ENCODE measurements at regions of chrX and their contacts with region 1.

Region 1: GRCh38 chrX:153667956-153668396 is 5.6 kb downstream of the PNCK start:
- DNase-seq: peak; percentile 56 to 83 (median 74)
- ATAC-seq: peak; percentile 92
- H3K4me3 ChIP-seq: peak overlapping the region in 1 of 2 experiments; percentile 8
- H3K4me3 Mint-ChIP-seq: peak overlapping the region; percentile 68
- H3K27ac ChIP-seq: no peak overlapping the region
- H3K27ac Mint-ChIP-seq: no peak overlapping the region
- H3K4me1 ChIP-seq: no peaks in the 10 kb centered on the region
- H3K4me1 Mint-ChIP-seq: peaks cover 7% of the 10 kb centered on the region
- H3K27me3 ChIP-seq: no peaks in the 10 kb centered on the region
- H3K27me3 Mint-ChIP-seq: peaks cover 13% of the 10 kb centered on the region
- CTCF ChIP-seq: peak; percentile 64

Region 2: DNA sequence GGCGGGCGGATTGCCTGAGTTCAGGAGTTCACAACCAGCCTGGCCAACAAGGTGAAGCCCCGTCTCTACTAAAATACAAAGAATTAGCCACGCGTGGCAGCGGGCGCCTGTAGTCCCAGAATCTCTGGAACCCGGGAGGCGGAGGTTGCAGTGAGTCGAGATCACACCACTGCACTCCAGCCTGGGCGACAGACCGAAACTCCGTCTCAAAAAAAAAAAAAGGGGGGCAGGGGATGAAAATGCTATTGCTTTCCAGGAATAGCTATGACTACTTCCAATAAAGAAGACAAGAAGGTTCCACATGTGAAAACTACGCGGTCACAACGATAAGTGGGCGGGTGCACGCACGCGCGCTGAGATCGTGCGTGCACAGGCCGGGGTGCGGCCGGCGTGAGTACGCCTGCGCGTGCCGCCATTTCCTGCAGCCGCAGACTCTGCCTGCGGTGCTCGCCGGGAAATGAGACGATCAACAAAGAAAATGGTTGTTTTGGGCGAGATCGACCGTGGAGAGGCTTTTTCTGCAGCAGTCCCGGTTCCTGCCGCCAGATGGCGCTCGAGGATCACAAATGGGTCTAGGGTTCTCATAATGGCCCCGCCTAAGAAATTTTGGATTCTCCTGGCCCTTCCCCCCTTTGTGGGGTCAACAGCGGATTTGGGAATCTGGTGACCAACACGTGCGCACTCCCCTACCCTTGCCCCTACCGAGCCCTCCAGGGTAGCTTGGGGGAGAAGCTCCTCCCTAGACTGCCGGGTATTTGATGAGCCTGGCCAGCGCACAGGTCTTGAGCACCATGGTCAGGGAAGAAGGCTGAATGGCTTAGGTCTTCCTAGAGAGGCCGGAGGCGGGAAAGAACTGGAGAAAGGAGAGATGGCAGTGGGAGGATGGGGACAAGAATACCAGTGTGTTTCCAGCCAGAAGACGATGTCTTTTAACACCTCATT is 709.2 kb before region 1 on chrX:
- CTCF ChIA-PET with region 1: interaction called, 15 read pairs
- POLR2A ChIA-PET with region 1: no interaction called
- intact Hi-C with region 1: loop called in 1 of 2 experiments (anchors 1 kb)
- DNase-seq: peak; percentile 82 to 97 (median 90)
- ATAC-seq: peak; percentile 97
- H3K4me3 ChIP-seq: peak overlapping the region; percentile 29 to 34
- H3K4me3 Mint-ChIP-seq: peak overlapping the region; percentile 71
- H3K27ac ChIP-seq: peak overlapping the region; percentile 48 to 73
- H3K27ac Mint-ChIP-seq: peak overlapping the region; percentile 89
- H3K4me1 ChIP-seq: peaks cover 6% of the 10 kb centered on the region
- H3K4me1 Mint-ChIP-seq: peaks cover 5% of the 10 kb centered on the region
- H3K27me3 ChIP-seq: no peaks in the 10 kb centered on the region
- H3K27me3 Mint-ChIP-seq: no peaks in the 10 kb centered on the region
- CTCF ChIP-seq: peak; percentile 66

Region 3: DNA sequence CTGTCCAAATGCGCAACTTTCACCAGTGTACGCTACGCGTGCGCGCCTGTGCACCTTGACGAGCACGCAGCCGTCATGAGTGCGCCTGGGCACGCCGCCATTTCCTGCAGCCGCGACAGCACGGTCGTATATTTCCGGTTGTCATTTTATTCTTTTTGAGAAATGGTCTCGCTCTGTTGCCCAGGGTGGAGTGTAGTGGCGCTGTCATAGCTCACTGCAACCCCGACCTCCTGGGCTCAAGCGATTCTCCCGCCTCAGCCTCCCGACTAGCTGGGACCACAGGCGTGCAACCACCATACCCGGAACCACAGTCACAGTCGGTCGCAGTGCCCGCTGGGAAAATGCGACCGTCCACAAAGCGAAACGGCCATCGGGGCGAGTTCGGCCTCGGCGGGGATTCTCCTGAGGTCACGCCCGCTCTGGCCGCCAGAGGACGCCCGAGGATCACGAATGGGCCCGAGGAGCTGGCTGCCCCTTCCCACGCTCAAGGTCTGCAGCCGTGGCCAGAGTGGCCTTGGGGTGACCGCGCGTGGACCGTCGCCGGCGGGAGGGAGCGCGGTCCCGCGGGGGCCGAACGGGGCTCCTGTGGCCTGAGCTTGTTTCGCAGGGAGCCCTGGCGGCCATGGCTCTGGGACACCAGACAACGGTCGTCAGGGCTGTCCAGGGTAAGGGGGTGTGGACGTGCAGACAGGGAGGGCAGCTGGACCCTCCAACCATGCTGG is 635.4 kb before region 1 on chrX:
- CTCF ChIA-PET with region 1: interaction called, 9 read pairs
- POLR2A ChIA-PET with region 1: no interaction called
- intact Hi-C with region 1: loop called (anchors 5 kb)
- DNase-seq: peak; percentile 33 to 80 (median 64)
- ATAC-seq: peak; percentile 73
- H3K4me3 ChIP-seq: peak overlapping the region; percentile 50 to 52
- H3K4me3 Mint-ChIP-seq: peak overlapping the region; percentile 86
- H3K27ac ChIP-seq: peak overlapping the region; percentile 42 to 51
- H3K27ac Mint-ChIP-seq: peak overlapping the region; percentile 91
- H3K4me1 ChIP-seq: peaks cover 10% of the 10 kb centered on the region
- H3K4me1 Mint-ChIP-seq: peaks cover 17% of the 10 kb centered on the region
- H3K27me3 ChIP-seq: no peaks in the 10 kb centered on the region
- H3K27me3 Mint-ChIP-seq: no peaks in the 10 kb centered on the region
- CTCF ChIP-seq: peak; percentile 66

Region 4: GRCh38 chrX:153539171-153539978 is 128.6 kb before region 1 on chrX:
- CTCF ChIA-PET with region 1: interaction called, 79 read pairs
- POLR2A ChIA-PET with region 1: no interaction called
- intact Hi-C with region 1: loop called (anchors 1 kb)
- DNase-seq: peak; percentile 19 to 75 (median 50)
- ATAC-seq: peak; percentile 82
- H3K4me3 ChIP-seq: no peak overlapping the region
- H3K4me3 Mint-ChIP-seq: no peak overlapping the region
- H3K27ac ChIP-seq: no peak overlapping the region
- H3K27ac Mint-ChIP-seq: no peak overlapping the region
- H3K4me1 ChIP-seq: no peaks in the 10 kb centered on the region
- H3K4me1 Mint-ChIP-seq: no peaks in the 10 kb centered on the region
- H3K27me3 ChIP-seq: no peaks in the 10 kb centered on the region
- H3K27me3 Mint-ChIP-seq: no peaks in the 10 kb centered on the region
- CTCF ChIP-seq: peak; percentile 51

Region 5: DNA sequence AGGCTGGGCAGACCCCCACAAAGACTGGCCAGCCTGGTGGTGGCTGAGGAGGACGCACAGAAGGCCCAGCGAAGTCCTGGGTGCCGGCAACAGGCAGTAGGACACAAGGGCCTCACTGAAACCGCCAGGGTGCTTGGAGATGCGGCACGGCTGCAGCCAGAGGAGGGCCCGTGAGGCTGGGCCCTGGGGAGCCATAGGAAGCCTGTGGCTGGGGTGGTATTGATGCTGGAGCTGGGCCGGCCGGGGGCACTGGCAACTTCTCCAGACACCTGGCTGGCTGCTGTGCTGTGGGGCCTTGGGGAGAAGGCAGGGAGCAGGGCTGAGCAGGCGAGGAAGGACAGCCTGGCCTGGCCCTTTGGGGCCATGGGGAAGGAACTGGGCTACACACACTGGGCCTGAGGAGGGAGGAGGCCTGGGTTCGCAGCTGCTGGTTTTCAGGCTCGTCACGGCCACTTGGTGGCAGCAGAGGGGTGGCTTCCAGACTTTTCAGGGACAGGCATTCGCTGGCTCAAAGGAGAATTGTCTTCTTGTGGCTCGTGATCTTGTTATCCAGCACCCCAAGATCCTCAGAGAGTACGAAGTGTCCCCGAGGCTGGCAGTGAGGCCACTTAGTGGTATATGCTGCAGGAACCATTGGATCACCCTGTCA is 113.3 kb before region 1 on chrX:
- CTCF ChIA-PET with region 1: interaction called, 67 read pairs
- POLR2A ChIA-PET with region 1: no interaction called
- intact Hi-C with region 1: loop called (anchors 1 to 2 kb)
- DNase-seq: peak; percentile 22 to 73 (median 60)
- ATAC-seq: peak; percentile 64
- H3K4me3 ChIP-seq: no peak overlapping the region
- H3K4me3 Mint-ChIP-seq: no peak overlapping the region
- H3K27ac ChIP-seq: no peak overlapping the region
- H3K27ac Mint-ChIP-seq: no peak overlapping the region
- H3K4me1 ChIP-seq: peaks cover 2% of the 10 kb centered on the region
- H3K4me1 Mint-ChIP-seq: no peaks in the 10 kb centered on the region
- H3K27me3 ChIP-seq: no peaks in the 10 kb centered on the region
- H3K27me3 Mint-ChIP-seq: no peaks in the 10 kb centered on the region
- CTCF ChIP-seq: peak; percentile 48

Region 6: DNA sequence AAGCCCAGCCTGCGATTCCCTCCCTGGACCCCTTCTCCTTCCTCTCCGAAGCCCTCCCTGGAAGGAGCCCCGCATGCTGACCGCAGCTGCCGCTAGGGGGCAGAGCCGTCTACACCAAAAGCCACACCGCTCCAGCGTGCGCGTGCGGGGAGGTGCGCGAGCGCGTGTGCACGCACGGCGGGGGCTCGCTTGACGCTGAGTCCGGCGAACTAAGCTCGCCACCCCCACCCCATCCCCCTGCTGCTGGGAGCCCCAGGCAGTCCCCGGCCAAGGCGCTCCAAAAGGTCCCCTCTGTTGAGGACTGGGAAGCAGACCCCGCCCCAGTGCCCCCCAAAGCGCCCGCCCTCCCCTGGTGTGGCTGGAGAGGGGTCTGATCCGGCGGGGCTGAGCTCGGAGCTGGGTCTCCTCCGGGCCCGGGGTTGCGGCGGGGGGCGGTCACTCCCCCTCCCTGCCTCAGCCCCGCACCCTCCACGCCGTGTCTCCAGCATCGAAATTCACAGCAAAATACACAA is 58.0 kb before region 1 on chrX:
- CTCF ChIA-PET with region 1: interaction called, 14 read pairs
- POLR2A ChIA-PET with region 1: no interaction called
- intact Hi-C with region 1: loop called (anchors 2 kb)
- DNase-seq: peak; percentile 57 to 87 (median 77)
- ATAC-seq: peak; percentile 89
- H3K4me3 ChIP-seq: peak overlapping the region; percentile 44 to 58
- H3K4me3 Mint-ChIP-seq: peak overlapping the region; percentile 87
- H3K27ac ChIP-seq: no peak overlapping the region
- H3K27ac Mint-ChIP-seq: peak overlapping the region; percentile 77
- H3K4me1 ChIP-seq: peaks cover 12% of the 10 kb centered on the region
- H3K4me1 Mint-ChIP-seq: peaks cover 18% of the 10 kb centered on the region
- H3K27me3 ChIP-seq: no peaks in the 10 kb centered on the region
- H3K27me3 Mint-ChIP-seq: no peaks in the 10 kb centered on the region
- CTCF ChIP-seq: peak; percentile 59

Region 7: DNA sequence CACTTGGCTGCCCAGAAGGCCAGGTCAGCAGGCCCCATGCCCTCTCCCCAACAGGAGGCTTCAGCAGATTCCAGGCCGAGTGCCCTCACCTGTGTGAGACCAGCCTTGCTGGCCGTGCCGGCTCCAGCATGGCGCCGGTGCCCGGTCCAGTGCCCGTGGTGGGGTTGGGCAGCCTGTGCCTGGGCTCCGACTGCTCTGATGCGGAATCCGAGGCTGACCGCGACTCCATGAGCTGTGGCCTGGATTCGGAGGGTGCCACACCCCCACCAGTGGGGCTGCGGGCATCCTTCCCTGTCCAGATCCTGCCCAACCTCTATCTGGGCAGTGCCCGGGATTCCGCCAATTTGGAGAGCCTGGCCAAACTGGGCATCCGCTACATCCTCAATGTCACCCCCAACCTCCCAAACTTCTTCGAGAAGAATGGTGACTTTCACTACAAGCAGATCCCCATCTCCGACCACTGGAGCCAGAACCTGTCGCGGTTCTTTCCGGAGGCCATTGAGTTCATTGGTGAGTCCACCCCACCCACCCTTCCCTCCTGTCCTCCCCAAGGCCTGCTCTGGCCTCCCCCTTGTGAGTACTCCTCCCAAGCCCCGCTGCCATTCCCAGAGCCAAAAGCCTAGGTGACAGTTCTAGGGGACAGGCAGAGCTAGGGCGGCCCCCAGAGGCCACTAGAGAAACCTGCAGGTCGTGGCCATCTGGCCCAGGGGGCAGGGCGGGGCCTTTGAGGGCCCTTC is 18.6 kb before region 1 on chrX:
- CTCF ChIA-PET with region 1: interaction called, 10 read pairs
- POLR2A ChIA-PET with region 1: no interaction called
- intact Hi-C with region 1: no loop called
- DNase-seq: peak in 5 of 9 experiments; percentile 21 to 57 (median 42)
- ATAC-seq: peak; percentile 77
- H3K4me3 ChIP-seq: no peak overlapping the region
- H3K4me3 Mint-ChIP-seq: no peak overlapping the region
- H3K27ac ChIP-seq: no peak overlapping the region
- H3K27ac Mint-ChIP-seq: no peak overlapping the region
- H3K4me1 ChIP-seq: no peaks in the 10 kb centered on the region
- H3K4me1 Mint-ChIP-seq: no peaks in the 10 kb centered on the region
- H3K27me3 ChIP-seq: peaks cover 2 to 8% of the 10 kb centered on the region in 2 experiments
- H3K27me3 Mint-ChIP-seq: peaks cover 4% of the 10 kb centered on the region
- CTCF ChIP-seq: peak; percentile 17